ENCODE measurements at regions of chr11 and their contacts with region 1.

Region 1: DNA sequence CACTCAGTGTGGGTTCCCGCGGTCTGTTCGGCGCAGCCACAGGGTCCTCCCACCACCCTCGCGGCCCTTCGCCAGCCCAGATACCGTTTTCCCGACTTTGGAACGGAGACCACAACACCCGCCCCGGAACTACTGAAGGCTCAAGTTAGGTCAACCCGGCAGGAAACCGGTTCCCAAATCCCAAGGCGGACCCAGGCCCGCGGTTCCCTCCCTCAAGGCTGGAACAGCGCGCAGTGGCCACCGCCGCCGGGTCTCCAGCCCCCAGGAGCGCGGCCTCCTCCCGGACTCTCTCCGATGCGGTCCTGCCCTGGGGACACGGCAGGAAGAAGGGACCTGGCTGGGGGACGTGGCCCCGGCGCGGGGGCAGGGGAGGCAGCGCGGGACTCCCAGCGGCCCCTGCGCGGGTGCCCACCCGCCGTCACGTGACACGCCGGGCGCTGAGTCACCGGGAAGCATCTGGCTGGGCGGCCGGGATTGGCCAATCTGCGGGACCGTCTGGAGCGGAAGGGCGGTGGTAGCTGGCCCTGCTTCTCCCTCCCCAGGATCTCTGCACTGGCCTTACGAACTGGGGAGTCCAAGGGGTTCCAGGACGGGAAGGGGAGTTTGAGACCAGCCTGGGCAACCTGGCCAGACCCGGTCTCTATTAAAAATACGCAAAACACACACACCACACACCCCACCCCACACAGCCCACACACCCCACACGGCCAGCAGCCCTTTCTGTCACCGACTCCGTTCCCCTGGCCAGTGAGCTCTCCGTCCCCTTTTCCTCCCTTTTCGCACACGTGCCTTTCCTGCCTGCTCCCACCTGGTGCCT is 21.5 kb upstream of the MALAT1 start:
- DNase-seq: no peak
- H3K4me3 ChIP-seq: peak overlapping the region; percentile 76
- H3K27ac ChIP-seq: peak overlapping the region; percentile 98
- H3K27me3 ChIP-seq: no peaks in the 10 kb centered on the region
- CTCF ChIP-seq: no peak

Region 2: GRCh38 chr11:65448418-65449105 is 28.8 kb before region 1 on chr11:
- CTCF ChIA-PET with region 1: no interaction called
- POLR2A ChIA-PET with region 1: interaction called, 17 read pairs
- DNase-seq: no peak
- H3K4me3 ChIP-seq: no peak overlapping the region
- H3K27ac ChIP-seq: peak overlapping the region; percentile 61
- H3K27me3 ChIP-seq: no peaks in the 10 kb centered on the region
- CTCF ChIP-seq: no peak

Region 3: DNA sequence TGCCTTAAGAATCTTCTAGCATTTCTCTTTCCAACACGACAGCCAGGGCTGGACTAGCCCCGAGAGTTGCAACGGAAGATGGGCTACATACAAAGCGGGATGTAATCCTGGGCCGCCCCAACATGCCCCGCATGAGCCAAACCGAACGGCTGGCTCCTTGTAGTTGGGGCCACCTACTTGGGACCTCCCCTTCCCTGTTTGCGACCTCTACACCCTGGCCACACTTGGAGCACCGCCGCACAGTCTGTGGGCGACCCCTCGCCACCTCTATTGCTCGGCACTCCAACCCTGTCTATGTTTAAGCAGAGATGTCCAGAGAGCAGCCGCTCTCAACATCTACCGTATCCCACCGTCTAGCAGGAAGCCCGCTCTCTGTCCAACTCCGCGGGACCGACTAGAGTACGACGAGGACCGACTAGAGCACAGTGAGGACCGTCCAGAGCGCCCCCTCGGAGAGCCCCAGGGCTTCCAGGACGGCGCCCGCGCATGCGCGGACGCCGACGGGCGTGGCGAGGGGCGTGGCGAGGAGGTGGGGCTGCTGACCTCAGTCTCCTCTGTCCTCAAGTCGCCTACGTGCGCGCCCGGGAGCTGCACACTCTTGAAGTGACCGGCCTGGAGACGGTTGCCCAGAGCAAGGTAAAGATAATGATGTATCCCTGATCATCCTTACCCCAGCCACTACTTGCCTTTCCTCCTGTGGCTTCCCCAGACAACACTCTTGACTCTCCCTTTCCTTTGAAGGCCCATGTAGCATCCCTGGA is 22.5 kb before region 1 on chr11:
- CTCF ChIA-PET with region 1: interaction called, 10 read pairs
- POLR2A ChIA-PET with region 1: interaction called, 17 read pairs
- DNase-seq: no peak
- H3K4me3 ChIP-seq: peak overlapping the region; percentile 67
- H3K27ac ChIP-seq: peak overlapping the region; percentile 82
- H3K27me3 ChIP-seq: no peaks in the 10 kb centered on the region
- CTCF ChIP-seq: no peak

Region 4: DNA sequence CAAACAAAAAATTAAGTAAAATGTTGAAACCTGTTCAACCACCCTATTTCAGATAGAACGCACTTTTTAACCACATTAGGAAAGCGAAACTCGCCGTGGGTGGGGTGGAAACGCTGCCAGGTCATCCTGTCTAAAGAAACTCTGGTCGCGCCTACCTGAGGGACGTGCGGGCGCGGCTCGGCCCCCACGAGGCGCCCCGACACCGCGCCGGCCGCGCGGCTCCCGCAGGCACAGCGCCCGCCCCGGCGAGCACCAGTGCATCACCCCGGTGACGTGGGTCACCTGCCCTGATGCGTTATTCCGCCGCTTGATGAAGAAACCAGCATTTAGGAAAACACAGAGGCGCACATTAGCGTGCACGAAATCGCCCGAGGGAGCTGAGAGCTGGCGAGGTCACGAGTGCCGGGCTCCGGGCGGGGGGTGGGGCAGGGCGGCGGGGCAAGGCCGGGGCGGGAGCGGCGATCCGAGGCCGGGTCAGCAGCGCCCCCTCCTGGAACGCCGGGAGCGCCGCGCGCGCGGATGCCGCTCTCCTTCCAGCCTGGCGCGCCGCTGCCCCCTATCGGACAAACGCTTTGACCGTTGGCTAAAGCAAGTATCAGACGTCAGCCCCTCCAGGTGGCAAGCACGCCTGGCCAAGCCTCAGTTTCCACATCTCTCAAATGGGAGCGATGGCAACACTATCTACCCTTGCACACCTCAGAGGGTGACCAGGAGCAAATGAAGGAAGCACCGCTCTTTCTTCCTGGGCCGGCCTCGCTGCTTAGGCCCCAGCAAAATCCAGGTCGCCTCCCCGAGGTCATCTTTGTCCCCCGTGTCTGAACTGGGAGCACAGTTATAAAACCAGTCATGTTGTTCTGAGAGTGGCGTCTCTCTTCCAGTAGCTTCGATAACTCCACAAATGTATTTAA is 340.7 kb after region 1 on chr11:
- CTCF ChIA-PET with region 1: no interaction called
- POLR2A ChIA-PET with region 1: no interaction called
- DNase-seq: peak; percentile 55
- H3K4me3 ChIP-seq: peak overlapping the region; percentile 77
- H3K27ac ChIP-seq: no peak overlapping the region
- H3K27me3 ChIP-seq: peaks cover 13% of the 10 kb centered on the region
- CTCF ChIP-seq: peak; percentile 93

Measured in AG04450 (cell line).